PC-3 (cell line): ENCODE measurements at regions of chr2 and their contacts with region 1.

Region 1: GRCh38 chr2:226423498-226423960 is 376.1 kb downstream of the IRS1 start:
- DNase-seq: peak; percentile 80
- ATAC-seq: peak; percentile 31
- H3K4me3 ChIP-seq: peak overlapping the region; percentile 33; the same call in 1 of the 2 replicates
- H3K27ac ChIP-seq: peak overlapping the region; percentile 95
- H3K4me1 ChIP-seq: peaks cover 56% of the 10 kb centered on the region
- H3K27me3 ChIP-seq: no peaks in the 10 kb centered on the region
- CTCF ChIP-seq: no peak

Region 2: DNA sequence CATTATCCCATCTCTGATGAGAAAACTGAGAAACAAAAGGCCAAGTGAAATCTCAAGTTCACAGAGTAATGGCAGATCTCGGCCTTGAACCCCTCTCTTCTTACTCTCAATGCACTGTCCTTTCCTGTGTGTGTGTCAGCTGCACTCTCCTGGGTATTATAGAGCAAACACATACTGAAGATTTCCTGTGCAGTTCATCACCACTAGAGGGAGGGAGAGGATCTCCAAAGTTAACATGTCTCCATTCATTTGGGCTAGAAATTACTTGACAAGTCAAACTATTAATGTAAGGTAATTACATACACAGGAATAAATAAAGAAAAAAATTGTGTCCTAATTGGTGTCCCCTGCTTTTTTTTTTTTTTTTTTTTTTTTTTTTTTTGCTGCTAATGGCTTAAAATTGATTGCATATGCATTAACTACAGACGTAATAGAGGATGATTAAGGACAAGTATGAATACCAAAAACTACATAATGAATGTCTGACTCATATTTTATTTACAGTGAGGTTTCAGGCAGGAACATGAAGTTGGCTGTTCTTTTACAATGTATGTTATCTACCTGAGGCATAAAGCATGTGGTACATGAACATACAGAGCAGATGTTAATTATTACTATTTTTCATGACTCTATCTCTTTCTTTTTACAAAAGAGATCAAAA is 754.8 kb before region 1 on chr2:
- CTCF ChIA-PET with region 1: no interaction called
- POLR2A ChIA-PET with region 1: no interaction called
- intact Hi-C with region 1: loop called (anchors 1 kb)
- DNase-seq: peak; percentile 82
- ATAC-seq: peak; percentile 90
- H3K4me3 ChIP-seq: no peak overlapping the region
- H3K27ac ChIP-seq: peak overlapping the region; percentile 17; the same call in 1 of the 2 replicates
- H3K4me1 ChIP-seq: peaks cover 16% of the 10 kb centered on the region
- H3K27me3 ChIP-seq: no peaks in the 10 kb centered on the region
- CTCF ChIP-seq: peak; percentile 93

Region 3: GRCh38 chr2:226185616-226186211 is 237.8 kb before region 1 on chr2:
- CTCF ChIA-PET with region 1: no interaction called
- POLR2A ChIA-PET with region 1: no interaction called
- intact Hi-C with region 1: loop called (anchors 5 kb)
- DNase-seq: peak; percentile 92
- ATAC-seq: peak; percentile 83
- H3K4me3 ChIP-seq: peak overlapping the region; percentile 57
- H3K27ac ChIP-seq: peak overlapping the region; percentile 95
- H3K4me1 ChIP-seq: peaks cover 46% of the 10 kb centered on the region
- H3K27me3 ChIP-seq: no peaks in the 10 kb centered on the region
- CTCF ChIP-seq: no peak

Region 4: GRCh38 chr2:226274143-226274542 is 149.4 kb before region 1 on chr2:
- CTCF ChIA-PET with region 1: no interaction called
- POLR2A ChIA-PET with region 1: no interaction called
- intact Hi-C with region 1: no loop called
- DNase-seq: peak; percentile 89
- ATAC-seq: peak; percentile 92
- H3K4me3 ChIP-seq: peak overlapping the region; percentile 7; the same call in 1 of the 2 replicates
- H3K27ac ChIP-seq: peak overlapping the region; percentile 68
- H3K4me1 ChIP-seq: peaks cover 17% of the 10 kb centered on the region
- H3K27me3 ChIP-seq: no peaks in the 10 kb centered on the region
- CTCF ChIP-seq: no peak

Region 5: GRCh38 chr2:226411727-226412360 is 11.7 kb before region 1 on chr2:
- CTCF ChIA-PET with region 1: no interaction called
- POLR2A ChIA-PET with region 1: no interaction called
- intact Hi-C with region 1: loop called (anchors 1 kb)
- DNase-seq: peak; percentile 96
- ATAC-seq: peak; percentile 98
- H3K4me3 ChIP-seq: no peak overlapping the region
- H3K27ac ChIP-seq: peak overlapping the region; percentile 78
- H3K4me1 ChIP-seq: peaks cover 21% of the 10 kb centered on the region
- H3K27me3 ChIP-seq: no peaks in the 10 kb centered on the region
- CTCF ChIP-seq: no peak

Region 6: DNA sequence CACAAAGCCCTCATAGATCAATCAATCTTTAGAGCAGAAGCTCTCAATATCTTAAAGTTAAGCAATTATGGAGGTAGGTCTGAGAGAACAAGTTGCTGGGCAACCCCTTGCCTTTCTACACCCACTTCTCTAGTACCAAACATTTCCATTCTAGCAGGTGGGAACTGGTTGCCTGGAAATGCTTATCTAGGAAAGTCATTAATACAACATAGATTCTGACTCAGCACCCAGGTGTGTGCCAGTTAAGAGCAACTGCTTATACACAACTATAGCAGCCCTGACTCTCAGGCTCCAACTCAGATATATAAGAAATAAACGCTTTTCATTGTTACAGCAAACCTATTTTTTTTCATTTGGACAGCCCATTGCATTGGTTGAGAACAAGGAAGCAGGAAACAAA is 138.4 kb after region 1 on chr2:
- CTCF ChIA-PET with region 1: no interaction called
- POLR2A ChIA-PET with region 1: no interaction called
- intact Hi-C with region 1: loop called (anchors 5 kb)
- DNase-seq: peak; percentile 67
- ATAC-seq: peak; percentile 56; the same call in 1 of the 2 replicates
- H3K4me3 ChIP-seq: no peak overlapping the region
- H3K27ac ChIP-seq: no peak overlapping the region
- H3K4me1 ChIP-seq: peaks cover 26% of the 10 kb centered on the region
- H3K27me3 ChIP-seq: no peaks in the 10 kb centered on the region
- CTCF ChIP-seq: no peak

Region 7: DNA sequence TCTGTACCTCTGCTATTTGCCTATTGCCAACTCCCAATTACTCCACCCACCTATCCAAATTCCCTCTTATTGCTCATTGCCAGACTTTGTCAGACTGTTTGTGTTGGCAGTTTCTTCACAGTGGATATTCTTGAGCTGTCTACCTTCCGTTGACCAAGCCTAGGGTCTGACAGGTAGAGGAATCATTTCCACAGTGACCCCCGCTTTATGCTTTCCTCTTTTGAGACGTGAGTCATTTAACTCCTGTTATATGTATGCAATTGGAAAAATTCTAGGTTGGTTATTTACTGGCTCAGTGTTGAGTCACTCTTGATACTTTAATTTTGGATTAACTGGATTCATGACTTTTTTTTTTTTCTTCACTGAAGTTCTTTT is 188.4 kb after region 1 on chr2:
- CTCF ChIA-PET with region 1: no interaction called
- POLR2A ChIA-PET with region 1: no interaction called
- intact Hi-C with region 1: loop called (anchors 5 kb)
- DNase-seq: peak; percentile 97
- ATAC-seq: peak; percentile 92
- H3K4me3 ChIP-seq: no peak overlapping the region
- H3K27ac ChIP-seq: peak overlapping the region; percentile 93
- H3K4me1 ChIP-seq: peaks cover 37% of the 10 kb centered on the region
- H3K27me3 ChIP-seq: no peaks in the 10 kb centered on the region
- CTCF ChIP-seq: no peak

Region 8: GRCh38 chr2:226791487-226792081 is 368.1 kb after region 1 on chr2:
- CTCF ChIA-PET with region 1: no interaction called
- POLR2A ChIA-PET with region 1: no interaction called
- intact Hi-C with region 1: loop called (anchors 1 kb)
- DNase-seq: peak; percentile 87
- ATAC-seq: peak; percentile 66
- H3K4me3 ChIP-seq: peak overlapping the region; percentile 88
- H3K27ac ChIP-seq: peak overlapping the region; percentile 88
- H3K4me1 ChIP-seq: peaks cover 39% of the 10 kb centered on the region
- H3K27me3 ChIP-seq: no peaks in the 10 kb centered on the region
- CTCF ChIP-seq: peak; percentile 18; the same call in 1 of the 2 replicates